ENCODE measurements at regions of chr5 and their contacts with region 1.

Region 1: DNA sequence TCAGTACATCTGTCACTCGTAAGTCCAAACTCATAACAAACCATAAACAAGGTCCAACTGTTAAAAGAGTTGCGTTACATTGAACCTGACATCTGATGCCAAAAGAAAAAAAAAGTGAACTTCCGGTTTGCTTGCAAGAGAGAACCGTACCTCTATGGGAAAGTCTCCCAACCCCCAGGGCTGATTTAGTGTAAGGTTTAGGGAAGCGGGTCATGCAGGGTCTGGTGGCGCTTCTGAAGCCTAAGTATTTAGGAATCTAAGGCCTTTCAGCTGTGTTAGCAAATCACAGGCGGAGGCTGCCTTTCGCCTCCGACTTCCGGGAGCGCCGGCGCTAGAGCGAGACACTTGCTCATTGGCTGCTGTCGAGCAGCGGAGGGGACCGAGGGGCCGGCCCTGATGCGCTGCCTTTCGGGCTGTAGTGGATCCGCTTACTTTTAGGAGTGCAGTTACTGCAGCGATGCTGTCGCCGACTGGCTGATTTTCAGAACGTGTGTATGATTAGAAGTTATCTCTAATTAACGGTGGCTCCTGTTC is 12.0 kb upstream of the GNPDA1 start:
- DNase-seq: peak; percentile 83
- ATAC-seq: peak; percentile 97
- H3K4me3 ChIP-seq: peak overlapping the region; percentile 71
- H3K27ac ChIP-seq: peak overlapping the region; percentile 76
- H3K4me1 ChIP-seq: peaks cover 31% of the 10 kb centered on the region
- H3K27me3 ChIP-seq: no peaks in the 10 kb centered on the region
- CTCF ChIP-seq: no peak

Region 2: DNA sequence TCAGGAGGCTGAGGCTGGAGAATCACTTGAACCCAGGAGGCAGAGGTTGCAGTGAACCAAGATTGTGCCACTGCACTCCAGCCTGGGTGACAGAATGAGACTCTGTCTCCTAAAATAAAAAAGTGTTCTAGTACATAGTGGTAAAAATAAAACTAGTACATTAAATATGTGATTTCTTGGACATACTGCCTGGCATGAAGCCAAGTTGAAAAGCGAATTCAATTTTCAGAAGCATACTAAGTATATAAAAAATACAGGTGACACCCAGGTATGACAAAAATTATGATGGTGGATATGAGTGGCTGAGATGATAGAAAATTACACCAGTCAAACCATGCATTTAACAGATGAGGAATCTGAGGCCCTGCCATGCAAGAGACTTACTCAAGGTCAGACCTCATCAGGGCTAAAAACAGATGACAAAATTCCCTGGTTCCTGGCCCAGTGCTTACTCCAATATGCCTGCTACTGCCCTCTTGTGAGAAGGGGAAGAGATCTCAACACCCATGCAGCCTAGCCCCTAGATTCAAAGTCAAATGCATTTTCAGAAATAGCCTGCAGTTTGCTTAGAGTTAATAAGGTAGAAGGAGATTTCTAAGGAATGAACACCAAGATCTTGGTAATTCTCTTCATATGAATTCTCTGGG is 34.6 kb after region 1 on chr5:
- CTCF ChIA-PET with region 1: no interaction called
- POLR2A ChIA-PET with region 1: interaction called, 4 read pairs
- intact Hi-C with region 1: loop called (anchors 2 kb)
- DNase-seq: peak; percentile 48
- ATAC-seq: no peak
- H3K4me3 ChIP-seq: no peak overlapping the region
- H3K27ac ChIP-seq: peak overlapping the region; percentile 94; the same call in 1 of the 2 replicates
- H3K4me1 ChIP-seq: peaks cover 27% of the 10 kb centered on the region
- H3K27me3 ChIP-seq: no peaks in the 10 kb centered on the region
- CTCF ChIP-seq: no peak; the same call in 1 of the 2 replicates

Region 3: DNA sequence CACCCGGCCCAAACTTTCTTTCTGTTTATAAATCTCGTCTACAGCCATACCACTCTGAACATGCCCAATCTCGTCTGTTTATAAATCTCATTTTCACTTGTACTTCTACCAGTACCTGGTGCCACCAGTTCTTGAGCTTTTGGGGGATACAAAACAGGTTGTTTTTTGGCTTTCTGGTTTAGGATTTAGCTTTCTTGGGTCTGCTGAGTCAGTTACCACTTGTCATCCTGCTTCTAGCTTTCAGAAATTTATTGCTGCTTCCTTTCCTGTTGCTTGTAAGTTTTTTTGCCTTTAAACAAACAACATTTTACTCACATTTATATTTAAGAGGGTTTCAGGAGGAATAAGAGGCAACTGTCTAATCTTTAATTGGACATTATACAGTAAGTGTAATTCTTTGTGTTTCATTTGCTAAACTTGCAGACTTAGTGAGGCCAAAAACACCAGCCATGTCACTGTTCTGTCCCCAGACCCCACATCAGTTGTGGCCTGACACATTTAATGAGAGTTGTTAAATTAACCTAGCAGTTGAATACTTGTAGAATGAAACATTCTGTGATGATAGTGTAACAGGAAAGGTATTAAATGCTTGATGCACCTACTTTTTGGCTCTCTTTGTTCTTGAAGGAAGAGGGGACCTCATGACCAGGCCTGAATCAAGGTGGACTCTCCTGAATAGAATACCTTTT is 95.6 kb after region 1 on chr5:
- CTCF ChIA-PET with region 1: no interaction called
- POLR2A ChIA-PET with region 1: no interaction called
- intact Hi-C with region 1: loop called (anchors 2 kb)
- DNase-seq: peak; percentile 29
- ATAC-seq: peak; percentile 49
- H3K4me3 ChIP-seq: no peak overlapping the region
- H3K27ac ChIP-seq: peak overlapping the region; percentile 26
- H3K4me1 ChIP-seq: peaks cover 37% of the 10 kb centered on the region
- H3K27me3 ChIP-seq: no peaks in the 10 kb centered on the region
- CTCF ChIP-seq: no peak